ENCODE measurements at regions of chr10 and their contacts with region 1.

Region 1: GRCh38 chr10:77377678-77378352 is 259.8 kb downstream of the KCNMA1 start:
- DNase-seq: no peak
- ATAC-seq: no peak
- H3K4me3 ChIP-seq: no peak overlapping the region
- H3K27ac ChIP-seq: no peak overlapping the region
- H3K4me1 ChIP-seq: peaks cover 10 to 22% of the 10 kb centered on the region in 2 donors
- H3K27me3 ChIP-seq: no peaks in the 10 kb centered on the region
- CTCF ChIP-seq: no peak
- POLR2A ChIP-seq: no peak

Region 2: GRCh38 chr10:77165445-77166208 is 212.2 kb before region 1 on chr10:
- in situ Hi-C with region 1: loop called in 2 of 4 experiments (anchors 25 kb)
- intact Hi-C with region 1: loop called (anchors 10 kb)
- DNase-seq: peak; percentile 28 to 29
- ATAC-seq: peak; percentile 27 to 70
- H3K4me3 ChIP-seq: peak overlapping the region in 1 of 4 donors; percentile 22
- H3K27ac ChIP-seq: no peak overlapping the region
- H3K4me1 ChIP-seq: peaks cover 0 to 46% of the 10 kb centered on the region in 2 donors
- H3K27me3 ChIP-seq: no peaks in the 10 kb centered on the region
- CTCF ChIP-seq: peak; percentile 66 to 78 (median 74)
- POLR2A ChIP-seq: no peak

Region 3: DNA sequence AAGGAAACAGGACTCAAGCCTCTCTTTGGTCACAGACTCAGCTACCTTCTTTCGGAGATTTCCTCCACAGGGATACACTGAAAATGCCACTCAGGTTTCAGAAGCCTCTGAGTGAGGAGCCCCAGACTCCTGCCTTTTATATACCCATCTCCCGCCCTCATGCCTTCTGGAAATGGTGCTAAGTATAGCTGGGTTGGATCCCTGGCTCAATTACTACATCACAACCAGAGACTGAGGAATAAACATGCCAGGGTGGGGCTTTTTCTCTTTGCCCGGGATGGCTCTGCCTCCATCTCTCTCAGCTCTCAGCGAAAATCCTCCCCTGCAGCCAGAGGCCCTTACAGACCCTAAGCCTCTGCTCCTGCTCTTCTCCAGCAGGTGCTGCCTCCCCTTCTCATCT is 39.7 kb before region 1 on chr10:
- in situ Hi-C with region 1: no loop called
- intact Hi-C with region 1: no loop called
- DNase-seq: no peak
- ATAC-seq: no peak
- H3K4me3 ChIP-seq: no peak overlapping the region
- H3K27ac ChIP-seq: no peak overlapping the region
- H3K4me1 ChIP-seq: peaks cover 15 to 20% of the 10 kb centered on the region in 2 donors
- H3K27me3 ChIP-seq: no peaks in the 10 kb centered on the region
- CTCF ChIP-seq: no peak
- POLR2A ChIP-seq: no peak